Heart left ventricle (tissue), 16 donors: ENCODE measurements at regions of chr15 and their contacts with region 1.

Region 1: DNA sequence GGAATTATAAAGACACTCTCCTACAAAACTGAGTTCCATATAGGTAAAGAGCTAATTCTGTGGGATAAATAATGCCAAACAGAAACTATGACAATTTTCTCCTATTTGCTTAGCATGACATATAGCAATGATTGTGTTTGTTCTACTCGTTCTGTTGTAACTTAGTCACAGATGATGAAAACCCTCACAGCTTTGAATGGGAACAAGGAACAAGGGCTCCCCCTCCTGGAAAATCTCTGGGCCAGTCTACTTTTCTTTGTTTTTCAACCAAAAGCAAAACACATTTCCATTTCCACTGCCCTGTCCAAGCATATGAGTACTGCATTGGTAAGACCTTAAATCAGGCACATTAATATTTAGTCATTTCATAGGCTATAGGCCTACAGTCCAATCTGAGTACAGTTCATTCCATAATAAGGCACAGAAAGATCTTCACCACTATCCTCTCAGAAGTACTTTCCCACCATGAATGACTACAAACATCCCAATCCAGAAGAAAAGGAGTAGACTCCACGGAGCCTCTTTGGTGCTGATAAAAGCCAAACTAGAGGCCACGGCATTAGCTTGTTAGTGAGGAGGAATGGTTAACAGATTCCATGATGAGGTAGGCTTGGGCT is 67.1 kb downstream of the ATP8B4 start:
- DNase-seq: peak in 4 of 5 donors; percentile 31 to 47 (median 38)
- ATAC-seq: peak in 3 of 4 donors; percentile 43 to 66 (median 49)
- H3K4me3 ChIP-seq: no peak overlapping the region
- H3K27ac ChIP-seq: peak overlapping the region in 1 of 12 donors; percentile 24
- H3K4me1 ChIP-seq: peaks cover 0 to 48% (median 5%) of the 10 kb centered on the region in 12 donors
- H3K27me3 ChIP-seq: no peaks in the 10 kb centered on the region
- CTCF ChIP-seq: peak; percentile 37 to 75 (median 62)
- POLR2A ChIP-seq: no peak

Region 2: GRCh38 chr15:49876401-49877038 is 175.4 kb before region 1 on chr15:
- intact Hi-C with region 1: loop called in 2 of 10 experiments (anchors 2 kb)
- DNase-seq: peak in 1 of 5 donors; percentile 33
- ATAC-seq: peak; percentile 36 to 78 (median 58)
- H3K4me3 ChIP-seq: peak overlapping the region in 3 of 12 donors; percentile 13 to 20 (median 16)
- H3K27ac ChIP-seq: peak overlapping the region; percentile 17 to 88 (median 78)
- H3K4me1 ChIP-seq: peaks cover 0 to 34% (median 5%) of the 10 kb centered on the region in 12 donors
- H3K27me3 ChIP-seq: no peaks in the 10 kb centered on the region
- CTCF ChIP-seq: peak; percentile 17 to 54 (median 42)
- POLR2A ChIP-seq: no peak

Region 3: DNA sequence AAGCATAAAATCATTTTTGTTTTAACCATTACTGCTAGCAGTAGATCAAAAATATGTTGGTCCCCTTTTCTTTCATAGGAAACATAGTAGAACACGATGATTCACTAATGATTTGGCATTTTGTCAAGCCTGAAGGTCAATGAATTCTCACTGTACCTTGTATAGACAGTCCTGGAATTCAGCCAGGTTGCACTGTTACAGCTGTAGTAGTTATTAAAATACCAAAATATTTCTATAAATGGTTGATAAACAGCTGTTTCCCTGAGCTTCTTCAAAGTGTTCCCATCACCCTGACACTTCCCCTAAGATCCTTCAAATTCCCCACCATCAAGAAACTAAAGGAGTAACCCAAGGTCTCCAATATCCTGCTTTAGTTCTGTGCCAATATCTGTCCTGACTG is 133.8 kb before region 1 on chr15:
- intact Hi-C with region 1: loop called in 1 of 10 experiments (anchors 10 kb)
- DNase-seq: peak in 2 of 5 donors; percentile 29 to 31
- ATAC-seq: peak in 2 of 4 donors; percentile 52 to 60
- H3K4me3 ChIP-seq: no peak overlapping the region
- H3K27ac ChIP-seq: peak overlapping the region in 2 of 12 donors; percentile 7 to 38
- H3K4me1 ChIP-seq: peaks cover 0 to 24% (median 0%) of the 10 kb centered on the region in 12 donors
- H3K27me3 ChIP-seq: no peaks in the 10 kb centered on the region
- CTCF ChIP-seq: no peak
- POLR2A ChIP-seq: no peak

Region 4: DNA sequence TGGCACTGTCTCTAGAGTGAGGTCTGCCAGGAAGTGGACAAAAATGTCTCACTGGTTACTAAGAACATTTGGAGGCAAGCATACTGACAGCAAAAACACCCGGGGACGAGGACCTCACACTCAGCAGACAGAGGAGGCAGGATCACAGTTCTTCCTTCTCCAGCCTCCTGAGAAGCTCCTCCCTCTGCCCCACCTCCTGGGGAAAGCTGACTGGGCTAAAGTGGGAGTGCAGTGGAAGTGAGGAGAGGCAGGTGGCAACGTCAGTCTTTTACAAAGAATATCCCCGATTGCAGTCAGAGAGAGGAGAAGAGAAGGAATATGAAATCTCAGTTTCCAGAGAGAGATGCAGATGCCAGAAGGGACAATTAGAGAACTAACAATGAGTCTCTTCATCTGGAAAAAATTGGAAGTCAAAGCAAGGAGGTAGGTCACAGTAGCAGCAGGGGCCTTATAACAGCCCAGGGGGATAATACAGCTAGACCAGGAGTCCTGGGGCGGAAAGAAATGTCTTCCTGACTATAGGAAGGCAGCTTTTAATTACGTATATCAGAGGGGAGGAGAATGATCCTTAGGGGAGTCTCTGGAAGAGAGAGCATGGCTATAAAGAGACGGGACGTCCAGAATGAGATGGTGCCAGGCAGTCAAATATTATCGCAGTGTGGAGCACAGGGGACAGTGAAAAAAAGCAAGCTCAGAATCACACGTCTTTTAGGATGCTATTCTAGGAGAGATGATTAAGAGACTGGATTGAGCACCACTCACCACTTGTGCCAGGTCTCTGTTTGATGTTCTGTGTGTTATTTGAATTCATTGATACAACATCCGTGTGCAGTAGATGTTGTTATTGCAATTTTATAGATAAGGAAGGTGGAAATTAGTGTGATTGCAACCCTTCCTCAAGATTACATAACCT is 1872.5 kb after region 1 on chr15:
- intact Hi-C with region 1: no loop called
- DNase-seq: peak in 3 of 5 donors; percentile 13 to 57 (median 45)
- ATAC-seq: peak; percentile 92 to 94 (median 93)
- H3K4me3 ChIP-seq: peak overlapping the region in 7 of 12 donors; percentile 1 to 44 (median 24)
- H3K27ac ChIP-seq: peak overlapping the region in 11 of 12 donors; percentile 50 to 91 (median 80)
- H3K4me1 ChIP-seq: peaks cover 0 to 12% (median 2%) of the 10 kb centered on the region in 12 donors
- H3K27me3 ChIP-seq: no peaks in the 10 kb centered on the region
- CTCF ChIP-seq: no peak
- POLR2A ChIP-seq: no peak